ENCODE measurements at regions of chr1 and their contacts with region 1.

Region 1: DNA sequence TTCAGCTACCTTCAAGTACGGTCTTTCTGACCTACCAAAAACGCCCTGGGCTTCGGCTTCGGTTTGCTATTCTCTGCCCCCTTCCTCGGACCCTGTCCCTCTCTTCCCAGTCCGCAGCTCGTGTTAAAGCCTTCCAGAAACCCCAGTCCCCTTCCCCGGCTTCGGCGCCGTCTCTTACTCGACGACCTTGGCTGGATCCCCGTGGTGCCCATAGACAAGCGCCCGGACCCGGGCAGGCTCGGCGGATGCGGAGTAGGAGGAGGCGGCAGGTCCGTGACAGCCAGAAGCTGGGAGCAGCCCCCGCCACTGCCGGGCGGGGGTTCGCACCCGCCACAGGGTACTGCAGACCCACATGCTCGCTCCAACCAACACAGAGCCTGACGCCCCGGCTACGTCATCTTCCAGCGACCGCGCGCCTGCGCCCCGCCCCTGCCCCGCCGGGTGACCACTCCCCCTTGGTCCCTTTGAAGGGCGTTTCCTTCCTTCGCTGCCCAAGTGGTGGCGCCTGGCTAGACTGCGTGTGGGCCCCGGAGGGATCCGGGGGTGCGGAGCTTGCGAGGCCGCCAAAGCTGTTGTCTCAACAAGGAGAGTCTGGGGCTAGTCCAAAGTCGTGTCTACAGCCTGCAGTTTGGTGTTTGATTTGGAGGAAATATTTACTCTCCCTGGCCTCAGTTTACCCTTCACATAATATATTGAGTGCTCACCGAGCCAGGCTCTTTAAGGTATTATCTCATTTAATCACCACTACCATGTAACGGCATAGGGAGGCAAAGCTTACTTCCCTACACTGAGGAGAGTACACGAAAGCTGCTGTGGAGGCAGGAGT is at the start of gene MECR:
- DNase-seq: peak; percentile 72
- H3K4me3 ChIP-seq: peak within 1 kb of the TSS; percentile 69
- CTCF ChIP-seq: peak; percentile 28

Region 2: GRCh38 chr1:29379443-29380073 is 148.8 kb after region 1 on chr1:
- in situ Hi-C with region 1: loop called (anchors 25 kb)
- DNase-seq: no peak
- H3K4me3 ChIP-seq: no peak overlapping the region
- CTCF ChIP-seq: peak; percentile 65

Region 3: GRCh38 chr1:29703596-29704370 is 473.0 kb after region 1 on chr1:
- in situ Hi-C with region 1: loop called (anchors 25 kb)
- DNase-seq: no peak
- H3K4me3 ChIP-seq: no peak overlapping the region
- CTCF ChIP-seq: peak; percentile 94

Region 4: DNA sequence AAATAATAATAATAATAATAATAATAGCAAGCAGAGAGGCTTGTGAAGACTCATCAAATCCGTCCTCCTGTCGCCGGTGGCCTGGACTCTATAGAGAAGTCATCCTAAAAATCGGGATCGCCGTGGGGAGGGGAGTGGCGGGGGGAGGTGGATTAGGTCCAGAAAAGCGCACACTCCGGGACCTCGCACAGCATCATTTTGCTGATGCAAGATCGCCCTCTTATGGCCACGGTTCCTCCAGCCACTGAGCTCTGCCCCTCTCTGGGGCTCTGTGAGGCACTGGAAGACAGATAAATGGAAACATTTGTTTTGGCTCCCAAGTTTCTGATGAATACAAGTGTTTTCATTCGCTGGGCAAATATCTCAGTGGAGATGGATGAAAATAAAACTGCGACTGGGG is 880.7 kb after region 1 on chr1:
- in situ Hi-C with region 1: loop called (anchors 25 kb)
- DNase-seq: peak; percentile 8
- H3K4me3 ChIP-seq: no peak overlapping the region
- CTCF ChIP-seq: peak; percentile 60